Right cardiac atrium (tissue), 5 donors: ENCODE measurements at regions of chr6 and their contacts with region 1.

Region 1: DNA sequence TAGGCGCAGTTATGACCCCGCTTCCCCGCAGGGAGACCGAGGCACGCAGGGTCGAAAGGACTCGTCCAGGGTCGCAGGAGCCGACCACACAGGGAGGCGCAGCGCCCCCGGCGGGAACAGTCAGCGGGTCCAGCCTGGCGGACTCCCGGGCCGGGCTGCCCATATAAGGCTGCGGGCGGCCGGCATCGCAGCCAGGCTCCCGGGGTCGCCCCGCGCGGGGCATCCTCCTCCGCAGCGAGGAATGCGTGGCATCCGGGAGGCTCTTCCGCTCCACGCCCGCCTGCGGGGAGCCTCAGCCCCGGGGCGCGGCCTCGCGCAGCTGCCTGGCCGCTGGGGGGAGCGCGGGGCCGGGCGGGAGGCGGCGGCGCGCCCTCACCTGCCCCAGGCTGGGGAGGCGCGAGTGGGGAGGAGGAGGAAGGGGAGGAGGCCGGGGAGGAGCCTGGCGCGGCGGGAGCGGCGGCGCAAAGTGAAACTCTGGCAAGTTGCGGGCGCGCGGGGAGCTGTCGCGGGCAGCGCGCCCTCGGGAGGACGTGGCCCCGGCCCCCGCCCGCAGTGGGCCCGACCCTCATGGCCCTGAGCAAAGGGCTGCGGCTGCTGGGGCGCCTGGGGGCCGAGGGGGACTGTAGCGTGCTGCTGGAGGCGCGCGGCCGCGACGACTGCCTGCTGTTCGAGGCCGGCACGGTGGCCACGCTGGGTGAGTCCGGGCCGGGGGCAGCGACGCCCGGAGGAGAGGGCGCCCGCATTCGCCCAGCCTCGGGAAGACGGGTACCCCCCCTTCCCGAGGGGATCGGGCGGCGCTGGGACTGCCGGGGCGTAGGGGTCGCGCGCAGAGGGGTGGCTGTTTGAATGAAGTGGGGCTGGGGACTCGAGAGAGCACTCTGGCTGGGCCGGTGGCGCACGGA is at the start of gene SYNJ2:
- DNase-seq: peak; percentile 76 to 91 (median 89)
- ATAC-seq: peak; percentile 84 to 92
- H3K4me3 ChIP-seq: peak within 1 kb of the TSS; percentile 64
- H3K27ac ChIP-seq: peak within 1 kb of the TSS; percentile 30
- H3K4me1 ChIP-seq: no peaks in the 10 kb centered on the region
- H3K27me3 ChIP-seq: no peaks in the 10 kb centered on the region
- total RNA-seq, gene SYNJ2: 13.4 to 26.3 (median 20.4) TPM

Region 2: GRCh38 chr6:158040051-158040803 is 58.6 kb after region 1 on chr6:
- intact Hi-C with region 1: loop called in 2 of 4 experiments (anchors 5 to 10 kb)
- DNase-seq: peak in 2 of 3 donors; percentile 52
- ATAC-seq: peak; percentile 34 to 68
- H3K4me3 ChIP-seq: no peak overlapping the region
- H3K27ac ChIP-seq: peak overlapping the region; percentile 86
- H3K4me1 ChIP-seq: peaks cover 23% of the 10 kb centered on the region
- H3K27me3 ChIP-seq: no peaks in the 10 kb centered on the region

Region 3: DNA sequence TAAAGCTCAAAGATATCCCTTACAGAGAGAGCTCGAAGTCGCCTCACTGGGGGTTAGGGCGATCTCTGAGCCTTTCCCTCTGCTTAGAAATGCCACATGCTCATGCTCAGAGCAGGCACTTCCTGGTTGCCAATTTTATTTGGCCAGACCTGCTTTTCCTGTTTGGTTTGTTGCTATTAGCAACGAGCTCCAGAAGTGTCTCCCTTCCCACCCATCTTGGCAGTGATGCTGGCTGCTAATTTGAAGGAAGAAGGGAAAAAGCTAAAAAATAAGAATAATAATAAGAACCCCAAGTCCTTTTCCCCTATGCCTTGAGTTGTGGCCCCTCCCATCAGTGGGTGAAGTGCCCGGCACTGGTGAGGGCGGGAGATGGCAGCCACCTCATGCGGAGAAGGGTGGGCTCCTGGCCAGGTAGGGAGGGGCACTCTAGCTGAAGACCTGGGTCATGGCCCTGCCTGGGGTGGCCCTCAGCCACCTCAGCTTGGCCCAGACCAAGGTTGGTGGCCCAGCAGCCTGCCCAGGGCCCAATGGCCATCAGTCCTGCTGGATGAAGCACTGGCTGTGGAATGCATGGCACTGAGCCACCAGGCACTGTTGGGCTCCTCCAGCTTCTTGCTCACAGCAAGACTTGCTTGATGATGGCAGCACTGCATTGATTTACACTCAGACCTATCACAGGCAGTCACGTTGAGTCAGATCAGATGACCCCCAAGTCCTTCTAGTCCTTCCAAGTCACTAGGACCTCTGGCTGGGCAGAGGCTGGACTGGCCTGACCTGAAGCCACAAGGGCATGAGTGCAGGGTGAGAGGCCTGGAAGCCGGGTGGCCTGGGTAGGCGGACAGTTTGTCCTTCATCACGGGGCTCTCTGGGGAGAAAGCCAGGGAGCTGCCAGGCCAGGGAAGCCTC is 79.1 kb after region 1 on chr6:
- intact Hi-C with region 1: loop called in 3 of 4 experiments (anchors 5 to 10 kb)
- DNase-seq: peak; percentile 92 to 95 (median 94)
- ATAC-seq: peak; percentile 88
- H3K4me3 ChIP-seq: no peak overlapping the region
- H3K27ac ChIP-seq: peak overlapping the region; percentile 79
- H3K4me1 ChIP-seq: peaks cover 13% of the 10 kb centered on the region
- H3K27me3 ChIP-seq: no peaks in the 10 kb centered on the region

Region 4: DNA sequence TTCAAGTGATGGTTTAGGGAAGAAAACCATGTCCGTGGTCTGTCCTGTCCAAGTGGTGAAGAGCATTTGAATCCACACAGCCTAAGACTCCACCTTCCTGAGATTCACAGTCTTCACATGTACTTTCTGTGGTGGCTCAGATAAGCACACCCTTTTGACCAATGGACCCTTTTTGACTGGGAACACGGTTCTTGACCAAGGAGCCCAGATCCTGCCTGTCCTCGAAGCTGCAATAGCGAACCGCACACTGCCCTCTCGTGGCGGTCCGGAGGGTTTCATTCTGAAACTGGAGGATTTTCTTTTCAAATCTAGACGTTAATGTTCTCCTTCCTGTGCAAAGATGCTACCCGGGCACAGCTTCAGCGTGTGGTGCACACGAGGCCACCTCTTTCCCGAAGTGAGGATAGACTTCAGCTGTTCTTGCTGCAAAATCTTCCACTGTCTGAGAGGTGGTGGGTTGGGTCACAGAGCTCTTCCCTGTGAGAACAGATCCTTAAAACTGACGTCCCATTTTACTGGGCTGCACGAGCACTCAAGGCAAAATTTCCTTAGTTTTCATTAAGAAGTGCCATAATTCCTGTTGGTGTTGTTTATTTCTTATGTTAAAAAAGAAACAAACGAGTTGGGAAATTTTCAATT is 90.6 kb after region 1 on chr6:
- intact Hi-C with region 1: loop called (anchors 5 to 10 kb)
- DNase-seq: peak; percentile 73 to 89 (median 88)
- ATAC-seq: peak; percentile 52 to 68
- H3K4me3 ChIP-seq: no peak overlapping the region
- H3K27ac ChIP-seq: no peak overlapping the region
- H3K4me1 ChIP-seq: no peaks in the 10 kb centered on the region
- H3K27me3 ChIP-seq: no peaks in the 10 kb centered on the region

Region 5: GRCh38 chr6:158938811-158939254 is 957.2 kb after region 1 on chr6:
- intact Hi-C with region 1: no loop called
- DNase-seq: peak in 2 of 3 donors; percentile 36 to 70
- ATAC-seq: peak; percentile 76 to 77
- H3K4me3 ChIP-seq: no peak overlapping the region
- H3K27ac ChIP-seq: no peak overlapping the region
- H3K4me1 ChIP-seq: no peaks in the 10 kb centered on the region
- H3K27me3 ChIP-seq: no peaks in the 10 kb centered on the region